ENCODE measurements at regions of chr5 and their contacts with region 1.

Region 1: DNA sequence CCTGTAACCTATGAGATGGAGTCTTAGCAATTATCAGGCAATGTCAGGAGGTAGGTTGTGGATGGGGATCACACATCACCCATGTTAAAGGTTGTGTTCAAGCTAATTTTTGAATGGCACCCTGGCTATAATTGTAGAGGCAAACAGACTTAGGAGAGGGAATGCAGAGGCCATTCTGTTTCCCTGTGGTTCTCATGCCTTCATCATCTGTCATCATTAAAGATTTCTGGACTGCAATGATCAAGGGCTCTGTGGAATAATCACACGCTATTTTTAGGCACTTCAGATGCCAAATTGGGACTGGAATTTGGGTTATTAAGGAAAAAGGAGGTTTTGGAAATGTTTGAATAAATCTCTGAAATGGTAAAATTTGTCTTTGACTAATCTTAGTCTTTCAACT is 1065.4 kb downstream of the TAF11L14 start:
- DNase-seq: no peak
- H3K4me3 ChIP-seq: no peak overlapping the region
- H3K27ac ChIP-seq: no peak overlapping the region
- H3K4me1 ChIP-seq: no peaks in the 10 kb centered on the region
- H3K27me3 ChIP-seq: no peaks in the 10 kb centered on the region
- CTCF ChIP-seq: no peak

Region 2: GRCh38 chr5:18393589-18394442 is 305.9 kb before region 1 on chr5:
- CTCF ChIA-PET with region 1: no interaction called
- dilution Hi-C with region 1: no loop called
- in situ Hi-C with region 1: no loop called
- intact Hi-C with region 1: loop called (anchors 1 kb)
- DNase-seq: peak; percentile 65
- H3K4me3 ChIP-seq: no peak overlapping the region
- H3K27ac ChIP-seq: no peak overlapping the region
- H3K4me1 ChIP-seq: no peaks in the 10 kb centered on the region
- H3K27me3 ChIP-seq: no peaks in the 10 kb centered on the region
- CTCF ChIP-seq: peak; percentile 81 to 89

Region 3: GRCh38 chr5:18465833-18466591 is 233.7 kb before region 1 on chr5:
- CTCF ChIA-PET with region 1: interaction called, 5 read pairs
- dilution Hi-C with region 1: no loop called
- in situ Hi-C with region 1: loop called in 1 of 2 experiments (anchors 10 kb)
- intact Hi-C with region 1: loop called (anchors 1 kb)
- DNase-seq: peak; percentile 51
- H3K4me3 ChIP-seq: no peak overlapping the region
- H3K27ac ChIP-seq: no peak overlapping the region
- H3K4me1 ChIP-seq: no peaks in the 10 kb centered on the region
- H3K27me3 ChIP-seq: no peaks in the 10 kb centered on the region
- CTCF ChIP-seq: peak; percentile 81 to 87